Breast epithelium (tissue), 4 donors: ENCODE measurements at regions of chr22 and their contacts with region 1.

Region 1: DNA sequence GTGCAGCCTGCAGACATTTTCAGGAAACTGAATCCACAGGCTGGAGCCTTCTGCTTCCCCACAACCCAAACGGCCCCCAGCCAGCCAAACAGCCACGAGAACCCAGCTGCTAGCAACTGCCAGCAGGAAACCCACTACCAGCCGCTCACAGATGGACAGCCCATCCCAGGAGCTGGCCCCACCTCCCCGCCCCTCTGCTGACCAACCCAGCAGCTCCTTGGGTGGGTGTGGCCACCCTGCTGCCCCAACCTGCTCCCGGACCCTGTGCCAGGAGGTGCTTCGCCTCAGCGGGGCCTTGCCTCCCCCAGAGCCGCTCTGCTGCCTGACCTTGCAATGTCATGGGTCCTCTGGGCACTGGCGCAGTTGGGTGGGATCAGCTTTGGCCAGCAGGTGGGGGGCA is 8.2 kb upstream of the CCDC188 start:
- DNase-seq: no peak
- H3K4me3 ChIP-seq: no peak overlapping the region
- H3K27ac ChIP-seq: no peak overlapping the region
- H3K4me1 ChIP-seq: no peaks in the 10 kb centered on the region
- H3K27me3 ChIP-seq: peaks cover 0 to 8% of the 10 kb centered on the region in 2 donors
- CTCF ChIP-seq: no peak
- POLR2A ChIP-seq: no peak

Region 2: GRCh38 chr22:19641254-19641982 is 517.7 kb before region 1 on chr22:
- intact Hi-C with region 1: no loop called
- DNase-seq: no peak
- H3K4me3 ChIP-seq: peak overlapping the region in 2 of 3 donors; percentile 14 to 45
- H3K27ac ChIP-seq: no peak overlapping the region
- H3K4me1 ChIP-seq: no peaks in the 10 kb centered on the region
- H3K27me3 ChIP-seq: peaks cover 0 to 15% of the 10 kb centered on the region in 2 donors
- CTCF ChIP-seq: peak in 1 of 3 donors; percentile 7
- POLR2A ChIP-seq: no peak

Region 3: DNA sequence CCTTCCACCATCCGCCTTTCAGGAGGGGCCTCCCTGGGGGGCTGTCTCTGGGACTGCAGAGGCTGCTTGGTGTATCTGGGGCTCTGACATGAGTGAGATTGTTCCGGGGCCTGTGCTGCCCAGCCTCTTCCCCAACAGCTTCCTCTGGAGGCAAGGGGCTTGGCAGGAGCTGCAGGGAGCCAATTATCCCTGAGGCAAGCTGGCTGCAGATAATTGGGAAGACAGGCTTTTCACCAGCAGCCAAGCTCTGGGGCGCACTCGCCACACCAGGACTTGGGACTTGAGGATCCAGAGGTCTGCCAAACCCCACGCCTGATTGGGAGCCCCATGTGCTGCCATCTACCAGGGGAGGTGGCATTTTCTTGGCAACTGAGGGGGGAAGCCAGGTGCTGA is 124.6 kb after region 1 on chr22:
- intact Hi-C with region 1: loop called (anchors 2 kb)
- DNase-seq: no peak
- H3K4me3 ChIP-seq: no peak overlapping the region
- H3K27ac ChIP-seq: no peak overlapping the region
- H3K4me1 ChIP-seq: no peaks in the 10 kb centered on the region
- H3K27me3 ChIP-seq: no peaks in the 10 kb centered on the region
- CTCF ChIP-seq: no peak
- POLR2A ChIP-seq: no peak